GM12878 (cell line): ENCODE measurements at regions of chr9 and their contacts with region 1.

Region 1: DNA sequence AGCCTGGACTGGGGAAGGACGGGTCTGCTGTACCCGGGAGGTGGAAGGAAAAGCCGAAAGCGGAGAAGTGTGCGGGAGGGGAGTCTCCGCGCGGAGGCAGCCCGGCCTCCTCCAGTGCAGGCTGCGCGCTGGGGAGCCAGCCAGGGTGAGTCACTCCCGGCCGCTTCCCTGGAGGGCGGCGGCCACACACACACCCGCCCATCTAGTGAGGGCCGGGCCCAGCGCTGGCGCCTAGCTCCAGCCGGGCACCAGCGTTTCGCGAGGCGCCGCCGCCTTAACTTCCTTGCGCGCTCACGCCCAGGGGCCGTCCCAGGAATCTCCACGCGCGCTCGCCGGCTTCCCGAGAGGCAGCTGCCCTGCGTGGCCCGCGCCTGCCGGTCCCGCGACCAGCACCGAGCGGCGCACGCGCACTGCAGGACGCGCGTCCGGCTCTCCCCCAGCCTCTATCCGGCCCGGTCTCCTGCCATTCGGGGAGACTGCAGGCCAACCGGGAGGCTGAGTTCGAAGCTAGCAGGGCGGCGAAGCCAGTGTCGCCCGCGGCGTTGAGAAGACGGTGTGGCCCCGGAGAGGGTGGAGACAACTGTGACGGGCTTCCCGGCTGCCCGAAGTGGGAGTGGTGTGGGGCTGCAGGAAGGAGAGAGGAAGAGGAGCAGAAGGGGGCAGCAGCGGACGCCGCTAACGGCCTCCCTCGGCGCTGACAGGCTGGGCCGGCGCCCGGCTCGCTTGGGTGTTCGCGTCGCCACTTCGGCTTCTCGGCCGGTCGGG is at the start of gene JAK2:
- DNase-seq: peak; percentile 79
- ATAC-seq: peak; percentile 83
- H3K4me3 ChIP-seq: peak within 1 kb of the TSS; percentile 76
- H3K27ac ChIP-seq: peak within 1 kb of the TSS; percentile 89
- H3K4me1 ChIP-seq: peaks cover 26% of the 10 kb centered on the region
- H3K27me3 ChIP-seq: no peaks in the 10 kb centered on the region
- CTCF ChIP-seq: peak in 2 of 3 experiments; percentile 44 to 57; a peak in 3 of 6 replicates
- EP300 ChIP-seq: no peak
- POLR2A ChIP-seq: peak; percentile 93
- RAD21 ChIP-seq: peak; percentile 24
- polyA plus RNA-seq, gene JAK2: 4.1 to 4.9 TPM

Region 2: GRCh38 chr9:4750023-4750673 is 234.7 kb before region 1 on chr9:
- CTCF ChIA-PET with region 1: interaction called, 4 read pairs
- POLR2A ChIA-PET with region 1: interaction called, 3 read pairs
- RAD21 ChIA-PET with region 1: interaction called, 8 read pairs
- SMC1A ChIA-PET with region 1: interaction called, 3 read pairs
- in situ Hi-C with region 1: loop called (anchors 5 kb)
- intact Hi-C with region 1: no loop called
- DNase-seq: no peak
- ATAC-seq: peak; percentile 86
- H3K4me3 ChIP-seq: no peak overlapping the region
- H3K27ac ChIP-seq: no peak overlapping the region
- H3K4me1 ChIP-seq: peaks cover 4% of the 10 kb centered on the region; the same call in 1 of the 2 replicates
- H3K27me3 ChIP-seq: no peaks in the 10 kb centered on the region
- CTCF ChIP-seq: peak; percentile 54 to 59 (median 58); a peak in 5 of 6 replicates
- EP300 ChIP-seq: no peak
- POLR2A ChIP-seq: no peak
- RAD21 ChIP-seq: peak; percentile 72

Region 3: DNA sequence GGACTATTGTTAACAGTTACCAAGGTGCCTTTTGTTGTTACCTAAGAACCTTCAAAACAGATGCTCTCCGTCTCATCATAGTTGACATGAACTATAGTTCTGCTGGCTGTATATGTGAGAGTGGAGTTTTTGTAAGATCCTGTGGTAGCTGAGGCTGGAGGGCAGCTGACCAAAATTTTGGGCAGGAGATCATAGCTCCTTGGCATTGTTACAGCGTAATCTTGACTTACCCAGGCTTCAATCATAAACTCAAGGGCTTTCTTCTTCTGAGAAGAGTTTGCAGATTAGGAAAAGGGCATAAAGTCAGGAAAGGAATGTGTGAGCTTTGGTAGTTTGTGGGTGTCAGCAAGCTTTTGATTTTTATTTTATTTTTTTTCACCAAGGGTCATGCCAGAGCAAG is 157.6 kb before region 1 on chr9:
- CTCF ChIA-PET with region 1: interaction called, 3 read pairs
- POLR2A ChIA-PET with region 1: interaction called, 14 read pairs
- RAD21 ChIA-PET with region 1: interaction called, 4 read pairs
- SMC1A ChIA-PET with region 1: interaction called, 4 read pairs
- in situ Hi-C with region 1: no loop called
- intact Hi-C with region 1: no loop called
- DNase-seq: no peak
- ATAC-seq: no peak
- H3K4me3 ChIP-seq: no peak overlapping the region
- H3K27ac ChIP-seq: no peak overlapping the region
- H3K4me1 ChIP-seq: peaks cover 2% of the 10 kb centered on the region
- H3K27me3 ChIP-seq: no peaks in the 10 kb centered on the region
- CTCF ChIP-seq: no peak
- EP300 ChIP-seq: no peak
- POLR2A ChIP-seq: no peak
- RAD21 ChIP-seq: no peak

Region 4: GRCh38 chr9:4904322-4905134 is 80.3 kb before region 1 on chr9:
- CTCF ChIA-PET with region 1: no interaction called
- POLR2A ChIA-PET with region 1: no interaction called
- RAD21 ChIA-PET with region 1: no interaction called
- SMC1A ChIA-PET with region 1: no interaction called
- in situ Hi-C with region 1: no loop called
- intact Hi-C with region 1: no loop called
- DNase-seq: no peak
- ATAC-seq: no peak
- H3K4me3 ChIP-seq: no peak overlapping the region
- H3K27ac ChIP-seq: no peak overlapping the region
- H3K4me1 ChIP-seq: 0 out of 2 replicates have a peak, but pooled peaks cover 4% of the 10 kb centered on the region
- H3K27me3 ChIP-seq: no peaks in the 10 kb centered on the region
- CTCF ChIP-seq: no peak
- EP300 ChIP-seq: no peak
- POLR2A ChIP-seq: no peak
- RAD21 ChIP-seq: no peak

Region 5: GRCh38 chr9:4939118-4939561 is 45.7 kb before region 1 on chr9:
- CTCF ChIA-PET with region 1: interaction called, 11 read pairs
- POLR2A ChIA-PET with region 1: interaction called, 8 read pairs
- RAD21 ChIA-PET with region 1: interaction called, 42 read pairs
- SMC1A ChIA-PET with region 1: interaction called, 36 read pairs
- in situ Hi-C with region 1: no loop called
- intact Hi-C with region 1: loop called (anchors 1 kb)
- DNase-seq: peak; percentile 93
- ATAC-seq: peak; percentile 92
- H3K4me3 ChIP-seq: no peak overlapping the region
- H3K27ac ChIP-seq: peak overlapping the region; percentile 78
- H3K4me1 ChIP-seq: peaks cover 52% of the 10 kb centered on the region
- H3K27me3 ChIP-seq: no peaks in the 10 kb centered on the region
- CTCF ChIP-seq: no peak
- EP300 ChIP-seq: peak; percentile 83 to 86
- POLR2A ChIP-seq: no peak
- RAD21 ChIP-seq: no peak

Region 6: DNA sequence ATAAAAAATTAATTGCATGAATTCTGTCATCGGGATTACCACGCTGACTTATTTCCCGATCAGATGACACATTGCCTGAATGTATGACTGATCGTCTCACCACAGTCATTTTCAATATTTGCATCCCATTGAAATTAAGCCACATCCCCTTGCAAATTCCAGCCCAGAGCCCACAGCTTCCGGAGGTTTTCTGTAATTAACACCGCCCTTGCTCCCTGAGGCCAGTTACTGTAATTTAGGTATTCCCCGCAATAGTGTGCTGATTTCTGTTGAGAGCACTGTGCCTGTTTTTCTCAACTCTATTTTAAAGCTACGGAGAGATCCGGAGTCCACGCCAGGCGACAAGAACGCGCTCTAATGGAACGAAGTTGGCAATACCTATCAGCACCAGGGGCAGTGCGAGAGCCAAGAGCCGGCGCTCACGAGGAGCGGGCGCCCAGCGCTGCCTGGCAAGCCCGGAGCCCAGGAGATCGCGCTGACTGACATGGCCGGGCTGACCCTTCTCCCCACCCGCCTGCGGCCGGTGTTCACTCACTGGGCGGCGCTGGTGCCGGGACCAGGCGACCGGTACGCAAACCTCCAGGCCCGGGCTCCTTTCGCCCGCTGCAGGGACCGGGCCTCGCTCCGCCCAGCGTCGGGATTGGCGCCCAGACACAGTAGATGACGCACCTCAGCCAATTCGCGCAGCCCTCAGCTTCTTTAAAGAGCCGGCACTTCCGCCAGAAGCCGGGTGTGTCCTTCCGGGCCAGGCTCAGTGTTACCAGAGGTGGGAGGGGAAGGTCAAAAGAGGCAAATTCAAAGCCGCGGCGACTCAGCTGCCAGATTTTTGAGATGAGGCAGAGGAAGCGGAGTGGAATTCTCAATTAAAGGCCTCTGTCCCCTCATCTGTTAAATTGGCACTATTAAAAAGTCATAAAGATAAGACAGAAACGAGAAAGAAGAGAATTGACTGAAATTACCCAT is 452.7 kb after region 1 on chr9 and contains the start of gene PLGRKT:
- CTCF ChIA-PET with region 1: interaction called, 22 read pairs
- POLR2A ChIA-PET with region 1: interaction called, 4 read pairs
- RAD21 ChIA-PET with region 1: interaction called, 6 read pairs
- SMC1A ChIA-PET with region 1: interaction called, 15 read pairs
- in situ Hi-C with region 1: no loop called
- intact Hi-C with region 1: no loop called
- DNase-seq: peak; percentile 81
- ATAC-seq: peak; percentile 88
- H3K4me3 ChIP-seq: peak within 1 kb of the TSS; percentile 86
- H3K27ac ChIP-seq: peak within 1 kb of the TSS; percentile 96
- H3K4me1 ChIP-seq: peaks cover 7% of the 10 kb centered on the region
- H3K27me3 ChIP-seq: no peaks in the 10 kb centered on the region
- CTCF ChIP-seq: peak; percentile 17 to 31 (median 17); a peak in 3 of 6 replicates
- EP300 ChIP-seq: peak in 1 of 2 experiments; percentile 37; a peak in 1 of 4 replicates
- POLR2A ChIP-seq: peak; percentile 95
- RAD21 ChIP-seq: no peak
- polyA plus RNA-seq, gene PLGRKT: 62.2 to 64.4 TPM